Activated naive CD4-positive, alpha-beta T cell treated with anti-CD3 and anti-CD28 coated beads for 36 hours (primary cell): ENCODE measurements at regions of chr1 and their contacts with region 1.

Region 1: GRCh38 chr1:15272009-15272788 is 25.2 kb downstream of the FHAD1 start:
- DNase-seq: peak; percentile 71
- H3K4me3 Mint-ChIP-seq: no peak overlapping the region
- H3K27ac Mint-ChIP-seq: no peak overlapping the region
- H3K4me1 Mint-ChIP-seq: peaks cover 4% of the 10 kb centered on the region
- H3K27me3 Mint-ChIP-seq: peaks cover 30% of the 10 kb centered on the region

Region 2: GRCh38 chr1:15152318-15153183 is 119.6 kb before region 1 on chr1:
- CTCF ChIA-PET with region 1: interaction called, 8 read pairs
- intact Hi-C with region 1: loop called (anchors 1 kb)
- DNase-seq: peak; percentile 74
- H3K4me3 Mint-ChIP-seq: peak overlapping the region; percentile 51
- H3K27ac Mint-ChIP-seq: no peak overlapping the region
- H3K4me1 Mint-ChIP-seq: peaks cover 30% of the 10 kb centered on the region
- H3K27me3 Mint-ChIP-seq: peaks cover 46% of the 10 kb centered on the region

Region 3: GRCh38 chr1:15195420-15196052 is 76.7 kb before region 1 on chr1:
- CTCF ChIA-PET with region 1: interaction called, 3 read pairs
- intact Hi-C with region 1: loop called (anchors 2 kb)
- DNase-seq: no peak
- H3K4me3 Mint-ChIP-seq: no peak overlapping the region
- H3K27ac Mint-ChIP-seq: no peak overlapping the region
- H3K4me1 Mint-ChIP-seq: no peaks in the 10 kb centered on the region
- H3K27me3 Mint-ChIP-seq: no peaks in the 10 kb centered on the region

Region 4: GRCh38 chr1:15261155-15262002 is 10.8 kb before region 1 on chr1:
- CTCF ChIA-PET with region 1: interaction called, 10 read pairs
- intact Hi-C with region 1: no loop called
- DNase-seq: peak; percentile 45
- H3K4me3 Mint-ChIP-seq: peak overlapping the region; percentile 5
- H3K27ac Mint-ChIP-seq: no peak overlapping the region
- H3K4me1 Mint-ChIP-seq: peaks cover 18% of the 10 kb centered on the region
- H3K27me3 Mint-ChIP-seq: peaks cover 33% of the 10 kb centered on the region

Region 5: GRCh38 chr1:15283526-15283925 is 11.3 kb after region 1 on chr1:
- CTCF ChIA-PET with region 1: no interaction called
- intact Hi-C with region 1: no loop called
- DNase-seq: no peak
- H3K4me3 Mint-ChIP-seq: no peak overlapping the region
- H3K27ac Mint-ChIP-seq: no peak overlapping the region
- H3K4me1 Mint-ChIP-seq: no peaks in the 10 kb centered on the region
- H3K27me3 Mint-ChIP-seq: peaks cover 2% of the 10 kb centered on the region

Region 6: GRCh38 chr1:15304701-15305467 is 32.7 kb after region 1 on chr1:
- CTCF ChIA-PET with region 1: interaction called, 4 read pairs
- intact Hi-C with region 1: loop called (anchors 1 kb)
- DNase-seq: peak; percentile 84
- H3K4me3 Mint-ChIP-seq: no peak overlapping the region
- H3K27ac Mint-ChIP-seq: no peak overlapping the region
- H3K4me1 Mint-ChIP-seq: no peaks in the 10 kb centered on the region
- H3K27me3 Mint-ChIP-seq: peaks cover 2% of the 10 kb centered on the region